ENCODE measurements at regions of chr10 and their contacts with region 1.

Region 1: GRCh38 chr10:15370856-15371701 is at the start of gene FAM171A1:
- DNase-seq: peak; percentile 40
- ATAC-seq: peak; percentile 71
- H3K4me3 ChIP-seq: peak within 1 kb of the TSS; percentile 70
- H3K27ac ChIP-seq: no peak within 1 kb of the TSS
- H3K4me1 ChIP-seq: peaks cover 5% of the 10 kb centered on the region
- H3K27me3 ChIP-seq: no peaks in the 10 kb centered on the region
- CTCF ChIP-seq: no peak
- total RNA-seq, gene FAM171A1: 10.4 and 10.7 TPM in 2 replicates

Region 2: DNA sequence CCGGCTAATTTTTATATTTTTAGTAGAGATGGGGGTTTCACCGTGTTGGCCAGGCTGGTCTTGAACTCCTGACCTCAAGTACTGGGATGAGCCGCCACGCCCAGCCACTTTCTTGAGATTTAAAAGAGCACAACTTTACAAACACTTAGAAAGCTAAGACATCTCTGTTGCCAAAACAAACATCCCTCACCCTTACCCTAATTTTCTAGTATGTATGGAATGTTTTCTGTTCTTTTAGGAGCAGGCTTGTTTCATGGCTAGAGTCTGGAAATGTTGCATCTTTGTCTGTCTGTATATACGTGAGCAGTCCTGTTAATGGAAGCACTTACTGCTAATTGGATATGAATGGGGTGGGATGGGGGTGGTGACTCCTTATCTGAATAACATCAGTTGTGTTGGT is 324.5 kb before region 1 on chr10:
- CTCF ChIA-PET with region 1: no interaction called
- POLR2A ChIA-PET with region 1: no interaction called
- intact Hi-C with region 1: no loop called
- DNase-seq: peak; percentile 30
- ATAC-seq: no peak
- H3K4me3 ChIP-seq: no peak overlapping the region
- H3K27ac ChIP-seq: no peak overlapping the region
- H3K4me1 ChIP-seq: peaks cover 7% of the 10 kb centered on the region; the same call in 1 of the 2 replicates
- H3K27me3 ChIP-seq: no peaks in the 10 kb centered on the region
- CTCF ChIP-seq: no peak

Region 3: DNA sequence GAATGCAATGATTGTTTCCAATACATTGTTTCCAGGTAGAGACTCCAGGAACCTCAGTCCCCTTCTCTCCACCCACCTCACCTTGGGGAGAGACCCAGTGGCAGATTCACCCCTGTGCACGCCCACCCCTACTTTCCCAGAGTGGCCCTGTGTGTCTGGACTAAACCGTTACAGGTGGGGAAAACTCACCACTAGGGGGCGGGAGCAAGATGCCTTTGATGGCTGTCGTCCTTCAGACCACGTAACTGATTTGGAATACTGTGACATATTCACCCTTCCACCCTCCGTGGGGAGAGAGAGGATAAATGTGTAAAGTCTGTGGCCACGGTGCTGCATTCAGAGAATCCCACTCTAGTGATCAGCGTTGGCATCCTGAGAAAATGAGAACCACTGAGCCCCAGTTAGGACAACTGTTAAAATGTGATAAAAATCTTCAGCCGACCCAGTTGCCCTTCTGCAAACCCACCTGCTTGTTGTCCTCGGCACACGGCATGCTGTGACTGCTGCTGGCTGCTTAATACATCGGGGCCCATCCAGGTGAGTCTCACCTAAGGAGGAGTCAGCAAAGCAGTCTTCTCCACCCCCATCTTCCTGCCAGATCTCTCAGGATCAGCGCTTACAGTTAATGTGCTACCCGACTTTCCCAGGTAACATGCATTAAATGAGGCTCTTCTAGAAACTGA is 161.1 kb before region 1 on chr10:
- CTCF ChIA-PET with region 1: interaction called, 3 read pairs
- POLR2A ChIA-PET with region 1: no interaction called
- intact Hi-C with region 1: loop called (anchors 2 kb)
- DNase-seq: peak; percentile 66
- ATAC-seq: peak; percentile 80
- H3K4me3 ChIP-seq: no peak overlapping the region
- H3K27ac ChIP-seq: no peak overlapping the region
- H3K4me1 ChIP-seq: peaks cover 13% of the 10 kb centered on the region
- H3K27me3 ChIP-seq: no peaks in the 10 kb centered on the region
- CTCF ChIP-seq: peak; percentile 75

Region 4: DNA sequence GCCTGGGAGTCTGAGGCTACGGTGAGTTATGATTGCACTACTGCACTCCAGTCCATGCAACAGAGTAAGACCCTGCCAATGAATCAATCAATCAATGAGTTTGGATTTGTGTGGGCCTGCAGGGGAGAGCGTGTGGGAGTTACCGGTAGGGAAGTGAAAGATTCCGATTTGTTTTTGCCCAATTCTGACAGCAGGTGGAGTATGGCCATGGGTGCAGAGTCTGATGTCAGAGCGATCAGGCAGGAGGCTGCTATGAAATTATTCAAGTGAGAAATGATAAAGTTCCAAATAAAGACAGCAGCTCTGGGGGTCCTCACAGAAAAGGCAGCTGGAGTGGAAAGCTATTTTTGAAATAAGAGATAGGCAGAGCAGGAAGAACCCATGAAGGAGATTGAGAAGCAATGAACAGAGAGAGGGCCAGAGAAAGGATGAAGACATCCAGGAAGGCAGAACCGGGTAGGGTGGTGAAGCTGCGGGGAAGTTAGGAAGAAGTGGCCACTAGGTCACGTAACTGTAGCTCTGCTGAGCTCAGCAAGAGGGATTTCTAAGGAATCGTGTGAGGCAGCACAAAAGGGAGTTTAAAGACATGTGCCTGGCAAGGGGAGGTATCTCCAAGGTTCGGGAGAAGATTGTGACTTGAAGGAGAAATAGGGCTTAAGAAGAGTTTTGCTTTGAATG is 108.9 kb before region 1 on chr10:
- CTCF ChIA-PET with region 1: interaction called, 3 read pairs
- POLR2A ChIA-PET with region 1: no interaction called
- intact Hi-C with region 1: loop called (anchors 2 kb)
- DNase-seq: peak; percentile 7
- ATAC-seq: no peak; the same call in 1 of the 2 replicates
- H3K4me3 ChIP-seq: no peak overlapping the region
- H3K27ac ChIP-seq: no peak overlapping the region
- H3K4me1 ChIP-seq: no peaks in the 10 kb centered on the region
- H3K27me3 ChIP-seq: no peaks in the 10 kb centered on the region
- CTCF ChIP-seq: peak; percentile 29; the same call in 1 of the 2 replicates

Region 5: DNA sequence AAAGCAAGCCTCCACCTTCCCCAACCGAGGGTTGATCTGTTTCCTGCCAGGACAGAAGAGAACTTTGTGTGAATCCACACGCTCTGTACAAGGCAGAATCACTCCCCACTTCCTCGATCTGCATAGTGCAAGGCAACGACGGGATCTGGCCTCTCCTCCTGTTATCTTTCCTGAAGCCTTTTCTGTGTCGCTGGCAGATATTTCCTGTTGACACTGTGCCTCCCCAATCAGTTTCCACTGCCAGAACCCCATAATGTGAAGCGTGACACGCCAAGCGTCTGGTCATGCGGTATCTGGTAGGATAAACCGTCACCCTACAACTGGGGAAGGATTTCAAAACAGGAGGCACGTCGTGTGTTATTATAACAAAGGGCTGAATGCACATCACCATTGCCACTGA is 57.2 kb before region 1 on chr10:
- CTCF ChIA-PET with region 1: no interaction called
- POLR2A ChIA-PET with region 1: no interaction called
- intact Hi-C with region 1: no loop called
- DNase-seq: no peak
- ATAC-seq: no peak
- H3K4me3 ChIP-seq: no peak overlapping the region
- H3K27ac ChIP-seq: no peak overlapping the region
- H3K4me1 ChIP-seq: no peaks in the 10 kb centered on the region
- H3K27me3 ChIP-seq: no peaks in the 10 kb centered on the region
- CTCF ChIP-seq: no peak

Region 6: GRCh38 chr10:15451137-15452094 is 80.3 kb after region 1 on chr10:
- CTCF ChIA-PET with region 1: no interaction called
- POLR2A ChIA-PET with region 1: no interaction called
- intact Hi-C with region 1: no loop called
- DNase-seq: no peak
- ATAC-seq: no peak
- H3K4me3 ChIP-seq: no peak overlapping the region
- H3K27ac ChIP-seq: no peak overlapping the region
- H3K4me1 ChIP-seq: no peaks in the 10 kb centered on the region
- H3K27me3 ChIP-seq: peaks cover 36% of the 10 kb centered on the region; the same call in 1 of the 2 replicates
- CTCF ChIP-seq: no peak

Measured in PC-3 (cell line).